Activated T-helper 1 cell treated with anti-CD3 and anti-CD28 coated beads, Interleukin-12 subunit alpha, Interleukin-12 subunit beta, Interleukin-2, Interleukin-4 antibody, amounts not matched to agents 30 ng/mL and 10 ng/mL and 1 ng/mL, durations not matched to agents 14 hours and 24 hours and 36 hours (primary cell): ENCODE measurements at regions of chr9 and their contacts with region 1.

Region 1: GRCh38 chr9:6598249-6598725 is 47.2 kb downstream of the GLDC start:
- DNase-seq: no peak
- H3K4me3 Mint-ChIP-seq: no peak overlapping the region
- H3K27ac Mint-ChIP-seq: peak overlapping the region; percentile 56
- H3K4me1 Mint-ChIP-seq: peaks cover 6% of the 10 kb centered on the region
- H3K27me3 Mint-ChIP-seq: no peaks in the 10 kb centered on the region

Region 2: GRCh38 chr9:6412487-6413364 is 185.6 kb before region 1 on chr9 and contains the start of gene UHRF2:
- intact Hi-C with region 1: no loop called
- DNase-seq: peak; percentile 97
- H3K4me3 Mint-ChIP-seq: peak within 1 kb of the TSS; percentile 89
- H3K27ac Mint-ChIP-seq: peak within 1 kb of the TSS; percentile 92
- H3K4me1 Mint-ChIP-seq: peaks cover 27% of the 10 kb centered on the region
- H3K27me3 Mint-ChIP-seq: no peaks in the 10 kb centered on the region
- total RNA-seq, gene UHRF2: 73.0 and 77.3 TPM in 2 replicates

Region 3: GRCh38 chr9:6566409-6567139 is 31.7 kb before region 1 on chr9:
- intact Hi-C with region 1: loop called (anchors 1 kb)
- DNase-seq: peak; percentile 44
- H3K4me3 Mint-ChIP-seq: peak overlapping the region; percentile 57
- H3K27ac Mint-ChIP-seq: peak overlapping the region; percentile 80
- H3K4me1 Mint-ChIP-seq: peaks cover 26% of the 10 kb centered on the region
- H3K27me3 Mint-ChIP-seq: peaks cover 4% of the 10 kb centered on the region